ENCODE measurements at regions of chr1 and their contacts with region 1.

Region 1: GRCh38 chr1:21782868-21783678 is at the start of gene USP48:
- DNase-seq: peak; percentile 98
- ATAC-seq: peak; percentile 79
- H3K4me3 Mint-ChIP-seq: peak within 1 kb of the TSS; percentile 87
- H3K27ac Mint-ChIP-seq: peak within 1 kb of the TSS; percentile 100
- H3K4me1 Mint-ChIP-seq: peaks cover 21% of the 10 kb centered on the region
- H3K27me3 Mint-ChIP-seq: no peaks in the 10 kb centered on the region
- total RNA-seq, gene USP48: 66.9 to 81.5 TPM

Region 2: GRCh38 chr1:21344750-21345443 is 438.2 kb before region 1 on chr1:
- CTCF ChIA-PET with region 1: no interaction called
- POLR2A ChIA-PET with region 1: no interaction called
- intact Hi-C with region 1: loop called in 1 of 2 experiments (anchors 2 kb)
- DNase-seq: peak; percentile 44
- ATAC-seq: peak; percentile 17
- H3K4me3 Mint-ChIP-seq: no peak overlapping the region
- H3K27ac Mint-ChIP-seq: peak overlapping the region; percentile 95
- H3K4me1 Mint-ChIP-seq: peaks cover 39% of the 10 kb centered on the region
- H3K27me3 Mint-ChIP-seq: no peaks in the 10 kb centered on the region

Region 3: GRCh38 chr1:21741206-21741605 is 41.9 kb before region 1 on chr1:
- CTCF ChIA-PET with region 1: no interaction called
- POLR2A ChIA-PET with region 1: no interaction called
- intact Hi-C with region 1: loop called in 1 of 2 experiments (anchors 2 kb)
- DNase-seq: no peak
- ATAC-seq: no peak
- H3K4me3 Mint-ChIP-seq: no peak overlapping the region
- H3K27ac Mint-ChIP-seq: no peak overlapping the region
- H3K4me1 Mint-ChIP-seq: peaks cover 24% of the 10 kb centered on the region
- H3K27me3 Mint-ChIP-seq: no peaks in the 10 kb centered on the region

Region 4: GRCh38 chr1:21818656-21819055 is 35.6 kb after region 1 on chr1:
- CTCF ChIA-PET with region 1: interaction called, 7 read pairs
- POLR2A ChIA-PET with region 1: no interaction called
- intact Hi-C with region 1: loop called in 1 of 2 experiments (anchors 1 kb)
- DNase-seq: peak; percentile 69
- ATAC-seq: peak; percentile 67
- H3K4me3 Mint-ChIP-seq: no peak overlapping the region
- H3K27ac Mint-ChIP-seq: no peak overlapping the region
- H3K4me1 Mint-ChIP-seq: peaks cover 6% of the 10 kb centered on the region
- H3K27me3 Mint-ChIP-seq: peaks cover 6% of the 10 kb centered on the region

Region 5: GRCh38 chr1:21931171-21932093 is 148.4 kb after region 1 on chr1:
- CTCF ChIA-PET with region 1: no interaction called
- POLR2A ChIA-PET with region 1: no interaction called
- intact Hi-C with region 1: no loop called
- DNase-seq: no peak
- ATAC-seq: no peak
- H3K4me3 Mint-ChIP-seq: no peak overlapping the region
- H3K27ac Mint-ChIP-seq: no peak overlapping the region
- H3K4me1 Mint-ChIP-seq: peaks cover 13% of the 10 kb centered on the region
- H3K27me3 Mint-ChIP-seq: peaks cover 4% of the 10 kb centered on the region

Region 6: GRCh38 chr1:22025368-22026155 is 242.5 kb after region 1 on chr1:
- CTCF ChIA-PET with region 1: interaction called, 4 read pairs
- POLR2A ChIA-PET with region 1: interaction called, 20 read pairs
- intact Hi-C with region 1: loop called (anchors 1 to 2 kb)
- DNase-seq: peak; percentile 94
- ATAC-seq: peak; percentile 74
- H3K4me3 Mint-ChIP-seq: peak overlapping the region; percentile 82
- H3K27ac Mint-ChIP-seq: peak overlapping the region; percentile 99
- H3K4me1 Mint-ChIP-seq: peaks cover 59% of the 10 kb centered on the region
- H3K27me3 Mint-ChIP-seq: no peaks in the 10 kb centered on the region

Region 7: GRCh38 chr1:22451702-22452474 is 668.8 kb after region 1 on chr1 and contains the start of gene ZBTB40:
- CTCF ChIA-PET with region 1: interaction called, 3 read pairs
- POLR2A ChIA-PET with region 1: no interaction called
- intact Hi-C with region 1: loop called in 1 of 2 experiments (anchors 1 kb)
- DNase-seq: peak; percentile 98
- ATAC-seq: peak; percentile 97
- H3K4me3 Mint-ChIP-seq: peak within 1 kb of the TSS; percentile 94
- H3K27ac Mint-ChIP-seq: peak within 1 kb of the TSS; percentile 90
- H3K4me1 Mint-ChIP-seq: peaks cover 41% of the 10 kb centered on the region
- H3K27me3 Mint-ChIP-seq: no peaks in the 10 kb centered on the region
- total RNA-seq, gene ZBTB40: 12.7 to 13.5 TPM

Measured in activated CD4-positive, alpha-beta T cell treated with anti-CD3 and anti-CD28 coated beads for 36 hours (primary cell).